ENCODE measurements at regions of chr2 and their contacts with region 1.

Region 1: GRCh38 chr2:61434314-61434713 is 36.6 kb downstream of the USP34 start:
- DNase-seq: no peak
- ATAC-seq: peak; percentile 35
- H3K4me3 Mint-ChIP-seq: no peak overlapping the region
- H3K27ac Mint-ChIP-seq: no peak overlapping the region
- H3K4me1 Mint-ChIP-seq: peaks cover 42% of the 10 kb centered on the region
- H3K27me3 Mint-ChIP-seq: no peaks in the 10 kb centered on the region

Region 2: DNA sequence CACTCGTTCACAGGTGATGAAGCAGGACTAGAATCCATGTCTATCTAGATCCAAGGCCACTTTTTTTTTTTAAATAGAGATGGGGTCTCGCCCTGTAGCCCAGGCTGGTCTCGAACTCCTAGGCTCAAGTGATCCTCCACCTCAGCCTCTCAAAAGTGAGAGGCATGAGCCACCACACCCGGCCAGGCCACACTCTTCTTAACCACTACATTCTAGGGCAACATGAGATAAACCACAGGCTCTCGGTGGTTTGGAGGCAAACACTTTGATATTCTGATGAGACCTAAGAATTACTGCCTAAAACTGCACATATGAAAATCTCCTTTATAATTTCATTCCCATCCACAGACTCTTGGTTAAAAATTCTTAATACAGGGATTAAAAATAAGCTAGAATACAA is 15.2 kb before region 1 on chr2:
- CTCF ChIA-PET with region 1: interaction called, 11 read pairs
- POLR2A ChIA-PET with region 1: no interaction called
- DNase-seq: peak; percentile 65
- ATAC-seq: peak; percentile 82
- H3K4me3 Mint-ChIP-seq: no peak overlapping the region
- H3K27ac Mint-ChIP-seq: no peak overlapping the region
- H3K4me1 Mint-ChIP-seq: peaks cover 36% of the 10 kb centered on the region
- H3K27me3 Mint-ChIP-seq: no peaks in the 10 kb centered on the region

Measured in activated CD8-positive, alpha-beta T cell treated with anti-CD3 and anti-CD28 coated beads, Interleukin-2, amount 10 ng/mL, durations not matched to agents 7 days and 5 days (primary cell).